ENCODE measurements at regions of chr17 and their contacts with region 1.

Region 1: DNA sequence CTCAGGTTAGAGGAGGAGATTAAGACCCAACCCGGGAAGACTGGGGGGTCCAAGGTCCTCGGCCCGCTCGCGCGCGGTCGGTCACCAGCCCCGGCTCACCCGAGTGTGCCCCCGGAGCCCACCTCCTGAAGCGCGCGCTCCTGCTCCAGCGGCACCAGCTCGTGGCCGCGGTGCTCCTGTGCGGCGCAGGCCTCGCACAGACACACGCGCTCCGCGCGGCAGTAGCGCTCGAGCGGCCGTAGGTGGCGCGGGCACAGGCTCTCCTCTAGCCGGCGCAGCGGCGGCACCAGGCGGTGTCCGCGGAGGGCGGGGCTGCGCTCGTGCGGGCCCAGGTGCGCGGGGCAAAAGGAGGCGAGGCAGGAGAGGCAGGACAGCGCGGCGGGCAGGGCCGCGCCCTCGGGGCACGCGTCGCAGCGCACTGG is 618 bp downstream of the TRIM47 start:
- DNase-seq: peak; percentile 81
- ATAC-seq: peak; percentile 65
- H3K4me3 Mint-ChIP-seq: peak overlapping the region; percentile 80
- H3K27ac Mint-ChIP-seq: peak overlapping the region; percentile 88
- H3K4me1 Mint-ChIP-seq: peaks cover 25% of the 10 kb centered on the region
- H3K27me3 Mint-ChIP-seq: no peaks in the 10 kb centered on the region
- CTCF ChIP-seq: peak; percentile 67

Region 2: GRCh38 chr17:75589919-75590303 is 287.9 kb before region 1 on chr17:
- CTCF ChIA-PET with region 1: no interaction called
- POLR2A ChIA-PET with region 1: no interaction called
- intact Hi-C with region 1: no loop called
- DNase-seq: no peak
- ATAC-seq: no peak
- H3K4me3 Mint-ChIP-seq: peak overlapping the region; percentile 28
- H3K27ac Mint-ChIP-seq: no peak overlapping the region
- H3K4me1 Mint-ChIP-seq: peaks cover 4% of the 10 kb centered on the region
- H3K27me3 Mint-ChIP-seq: no peaks in the 10 kb centered on the region
- CTCF ChIP-seq: no peak

Region 3: GRCh38 chr17:75720725-75721462 is 156.9 kb before region 1 on chr17 and contains the start of gene ITGB4:
- CTCF ChIA-PET with region 1: no interaction called
- POLR2A ChIA-PET with region 1: no interaction called
- intact Hi-C with region 1: no loop called
- DNase-seq: peak; percentile 63
- ATAC-seq: peak; percentile 93
- H3K4me3 Mint-ChIP-seq: peak within 1 kb of the TSS; percentile 67
- H3K27ac Mint-ChIP-seq: no peak within 1 kb of the TSS
- H3K4me1 Mint-ChIP-seq: peaks cover 3% of the 10 kb centered on the region
- H3K27me3 Mint-ChIP-seq: peaks cover 9% of the 10 kb centered on the region
- CTCF ChIP-seq: peak; percentile 14
- total RNA-seq, gene ITGB4: 0.69 to 1.8 TPM

Region 4: DNA sequence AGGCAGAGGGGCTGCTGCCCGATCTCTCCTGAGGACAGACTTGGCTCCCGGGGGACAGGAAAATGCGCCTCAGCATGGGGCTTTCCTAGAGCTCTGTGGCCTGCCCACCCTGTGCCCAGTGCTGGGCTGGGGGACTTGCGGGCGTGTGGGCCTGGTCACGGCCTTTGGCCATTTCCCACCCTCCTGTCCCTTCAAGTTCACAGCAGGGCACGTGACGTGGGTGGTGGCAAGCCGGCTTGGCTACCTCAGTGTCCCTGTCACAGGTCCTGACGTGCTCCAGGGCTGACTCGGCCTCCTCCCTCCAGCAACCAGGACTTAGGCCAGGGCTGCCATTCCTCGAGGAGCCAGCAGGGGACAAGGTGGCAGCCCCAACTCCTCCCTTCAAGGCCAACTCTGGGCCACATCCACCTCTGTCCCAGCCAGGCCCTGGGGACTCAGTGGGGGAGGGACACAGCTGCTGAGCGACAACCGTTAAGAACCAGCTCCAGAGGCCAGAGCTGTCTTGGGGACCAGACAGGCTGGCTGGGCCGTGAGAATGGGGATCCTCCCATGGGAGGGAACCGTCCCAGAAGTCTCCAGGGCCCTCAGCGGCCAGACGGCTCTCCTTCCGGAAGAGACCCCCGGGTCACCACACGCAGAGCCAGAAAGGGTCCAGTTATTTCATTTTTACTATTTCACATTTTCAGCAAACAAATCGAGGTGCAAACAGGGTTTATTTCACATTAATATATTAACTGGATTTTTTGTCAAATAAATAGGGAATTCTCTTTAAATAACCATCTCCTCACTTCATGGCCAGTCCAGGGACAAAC is 32.5 kb before region 1 on chr17:
- CTCF ChIA-PET with region 1: interaction called, 23 read pairs
- POLR2A ChIA-PET with region 1: interaction called, 6 read pairs
- intact Hi-C with region 1: no loop called
- DNase-seq: peak; percentile 83
- ATAC-seq: peak; percentile 72
- H3K4me3 Mint-ChIP-seq: peak overlapping the region; percentile 96
- H3K27ac Mint-ChIP-seq: peak overlapping the region; percentile 75
- H3K4me1 Mint-ChIP-seq: peaks cover 30% of the 10 kb centered on the region
- H3K27me3 Mint-ChIP-seq: no peaks in the 10 kb centered on the region
- CTCF ChIP-seq: peak; percentile 72

Region 5: GRCh38 chr17:75855310-75856081 is 22.3 kb before region 1 on chr17 and contains the start of gene WBP2:
- CTCF ChIA-PET with region 1: interaction called, 107 read pairs
- POLR2A ChIA-PET with region 1: interaction called, 72 read pairs
- intact Hi-C with region 1: no loop called
- DNase-seq: peak; percentile 100
- ATAC-seq: peak; percentile 93
- H3K4me3 Mint-ChIP-seq: no peak within 1 kb of the TSS
- H3K27ac Mint-ChIP-seq: peak within 1 kb of the TSS; percentile 92
- H3K4me1 Mint-ChIP-seq: peaks cover 33% of the 10 kb centered on the region
- H3K27me3 Mint-ChIP-seq: no peaks in the 10 kb centered on the region
- CTCF ChIP-seq: peak; percentile 53
- total RNA-seq, gene WBP2: 54.4 to 58.5 TPM

Region 6: DNA sequence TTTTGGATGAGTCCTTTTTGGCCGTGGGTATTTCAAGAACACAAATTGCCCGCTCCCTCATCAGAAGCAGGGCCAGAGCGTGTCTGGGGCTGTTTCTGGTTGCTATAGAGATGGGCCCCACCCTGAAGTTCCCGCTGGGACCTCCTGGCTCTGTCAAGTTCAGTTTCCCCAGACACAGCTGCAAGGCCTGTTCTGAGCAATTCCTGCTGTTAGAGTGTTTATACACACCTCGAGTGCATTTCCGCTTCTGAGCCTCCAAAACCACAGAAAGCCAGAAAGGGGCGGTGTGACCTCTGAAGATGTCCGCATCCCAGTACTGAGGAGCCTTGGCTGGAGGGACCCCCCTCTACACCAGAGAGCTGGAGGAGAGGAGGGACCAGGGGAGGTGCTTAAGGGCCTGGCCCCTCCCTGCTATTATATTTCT is 13.3 kb before region 1 on chr17:
- CTCF ChIA-PET with region 1: interaction called, 107 read pairs
- POLR2A ChIA-PET with region 1: interaction called, 72 read pairs
- intact Hi-C with region 1: no loop called
- DNase-seq: peak; percentile 71
- ATAC-seq: peak; percentile 78
- H3K4me3 Mint-ChIP-seq: no peak overlapping the region
- H3K27ac Mint-ChIP-seq: peak overlapping the region; percentile 78
- H3K4me1 Mint-ChIP-seq: peaks cover 17% of the 10 kb centered on the region
- H3K27me3 Mint-ChIP-seq: no peaks in the 10 kb centered on the region
- CTCF ChIP-seq: no peak

Region 7: GRCh38 chr17:75896415-75897159 is 18.8 kb after region 1 on chr17 and contains the start of gene TRIM65:
- CTCF ChIA-PET with region 1: interaction called, 78 read pairs
- POLR2A ChIA-PET with region 1: interaction called, 100 read pairs
- intact Hi-C with region 1: no loop called
- DNase-seq: peak; percentile 85
- ATAC-seq: peak; percentile 88
- H3K4me3 Mint-ChIP-seq: peak within 1 kb of the TSS; percentile 87
- H3K27ac Mint-ChIP-seq: peak within 1 kb of the TSS; percentile 88
- H3K4me1 Mint-ChIP-seq: peaks cover 21% of the 10 kb centered on the region
- H3K27me3 Mint-ChIP-seq: no peaks in the 10 kb centered on the region
- CTCF ChIP-seq: peak; percentile 17
- total RNA-seq, gene TRIM65: 37.1 to 42.2 TPM

Region 8: GRCh38 chr17:75904749-75905521 is 27.2 kb after region 1 on chr17 and contains the start of gene MRPL38:
- CTCF ChIA-PET with region 1: interaction called, 4 read pairs
- POLR2A ChIA-PET with region 1: interaction called, 100 read pairs
- intact Hi-C with region 1: no loop called
- DNase-seq: peak; percentile 96
- ATAC-seq: peak; percentile 98
- H3K4me3 Mint-ChIP-seq: peak within 1 kb of the TSS; percentile 87
- H3K27ac Mint-ChIP-seq: peak within 1 kb of the TSS; percentile 92
- H3K4me1 Mint-ChIP-seq: peaks cover 15% of the 10 kb centered on the region
- H3K27me3 Mint-ChIP-seq: no peaks in the 10 kb centered on the region
- CTCF ChIP-seq: peak; percentile 99
- total RNA-seq, gene MRPL38: 117 to 126 TPM

Region 9: DNA sequence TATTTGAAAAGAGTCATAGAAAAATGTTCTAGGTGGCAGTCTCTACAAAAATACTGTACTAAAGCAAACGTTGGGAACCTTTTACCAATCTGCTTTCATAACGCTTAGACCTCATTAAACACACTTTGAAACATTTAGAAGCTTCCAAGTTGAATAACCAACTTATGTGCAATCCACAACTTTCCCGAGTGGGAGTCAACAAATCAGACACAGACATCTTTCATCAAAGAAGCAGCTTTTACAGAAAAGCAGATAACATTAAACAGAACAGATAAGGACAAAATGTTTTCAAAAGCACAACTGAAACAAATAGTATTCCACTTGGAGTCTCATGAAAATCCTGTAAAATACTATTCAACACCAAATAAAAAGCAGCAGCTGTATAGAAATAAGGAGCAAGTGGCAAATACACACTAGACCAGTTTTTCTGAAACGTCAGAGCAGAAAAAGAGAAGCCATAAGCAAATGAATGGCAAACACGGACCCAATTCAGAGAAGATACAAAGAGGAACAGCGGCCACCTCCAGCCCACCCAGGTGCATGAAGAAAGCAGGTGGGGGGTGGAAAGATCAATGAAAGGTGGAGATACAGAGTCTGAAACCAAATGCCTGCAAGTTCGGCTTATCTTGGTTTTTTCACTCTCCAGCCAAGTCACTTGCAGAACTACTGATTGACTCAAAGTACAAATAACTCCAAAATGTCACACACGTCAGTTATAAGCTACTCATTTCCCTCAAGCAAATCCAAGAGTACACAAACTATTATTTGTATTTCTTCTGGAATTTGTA is 81.5 kb after region 1 on chr17:
- CTCF ChIA-PET with region 1: no interaction called
- POLR2A ChIA-PET with region 1: no interaction called
- intact Hi-C with region 1: no loop called
- DNase-seq: no peak
- ATAC-seq: no peak
- H3K4me3 Mint-ChIP-seq: no peak overlapping the region
- H3K27ac Mint-ChIP-seq: no peak overlapping the region
- H3K4me1 Mint-ChIP-seq: peaks cover 6% of the 10 kb centered on the region
- H3K27me3 Mint-ChIP-seq: no peaks in the 10 kb centered on the region
- CTCF ChIP-seq: no peak

Region 10: GRCh38 chr17:76005263-76006149 is 127.7 kb after region 1 on chr17:
- CTCF ChIA-PET with region 1: interaction called, 10 read pairs
- POLR2A ChIA-PET with region 1: no interaction called
- intact Hi-C with region 1: no loop called
- DNase-seq: peak; percentile 89
- ATAC-seq: peak; percentile 84
- H3K4me3 Mint-ChIP-seq: no peak overlapping the region
- H3K27ac Mint-ChIP-seq: no peak overlapping the region
- H3K4me1 Mint-ChIP-seq: no peaks in the 10 kb centered on the region
- H3K27me3 Mint-ChIP-seq: no peaks in the 10 kb centered on the region
- CTCF ChIP-seq: peak; percentile 81

Measured in activated CD8-positive, alpha-beta T cell treated with anti-CD3 and anti-CD28 coated beads for 36 hours (primary cell).